Right ventricle myocardium inferior (tissue), 1 donor: ENCODE measurements at regions of chr3 and their contacts with region 1.

Region 1: GRCh38 chr3:190197346-190197763 is 76.7 kb upstream of the P3H2 start:
- DNase-seq: no peak
- ATAC-seq: no peak

Region 2: DNA sequence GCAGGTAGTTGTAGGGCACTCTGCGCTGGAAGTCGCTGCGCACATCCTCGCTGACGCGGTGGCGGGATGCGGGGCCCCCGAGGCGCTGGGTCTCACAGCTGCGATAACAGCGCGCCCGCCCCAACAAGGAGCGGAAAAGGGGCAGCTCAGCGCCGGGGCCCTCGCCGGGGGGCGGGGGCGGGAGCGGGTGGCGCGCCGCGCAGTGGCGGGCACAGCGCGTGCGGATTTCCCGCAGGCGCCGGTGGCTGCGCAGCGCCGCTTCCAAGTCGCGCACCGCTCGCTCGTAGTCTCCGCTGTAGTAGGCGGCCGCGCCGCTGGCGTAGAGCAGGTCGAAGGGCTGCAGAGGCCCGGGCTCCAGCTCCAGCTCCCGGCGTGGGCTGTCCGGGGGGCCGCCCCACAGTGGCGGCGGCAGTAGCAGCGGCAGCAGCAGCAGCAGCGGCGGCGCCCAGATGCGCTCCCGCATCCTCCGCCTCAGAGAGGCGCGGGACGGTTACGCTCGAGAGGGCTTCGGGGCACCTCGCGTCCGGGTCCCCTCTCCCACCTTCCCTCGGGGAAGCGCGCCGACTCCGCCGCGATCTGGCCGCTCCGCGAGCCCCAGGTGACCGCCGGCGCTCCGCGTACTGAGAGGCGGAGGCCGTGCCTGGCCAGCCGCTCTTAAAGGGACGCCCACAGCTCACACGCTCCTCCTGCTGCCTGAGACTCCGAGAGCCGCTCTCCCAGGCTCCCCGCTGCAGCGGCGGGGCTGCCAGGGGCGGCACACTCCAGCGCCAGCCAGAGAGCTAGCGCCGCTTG is 76.9 kb before region 1 on chr3 and contains the start of gene P3H2:
- intact Hi-C with region 1: loop called (anchors 5 kb)
- DNase-seq: peak; percentile 87
- ATAC-seq: peak; percentile 99
- total RNA-seq, gene P3H2: 1.3 TPM